Mammary epithelial cell (primary cell): ENCODE measurements at regions of chr15 and their contacts with region 1.

Region 1: GRCh38 chr15:40038638-40039543 is at the start of gene SRP14:
- DNase-seq: peak; percentile 89
- H3K4me3 ChIP-seq: peak within 1 kb of the TSS; percentile 65 to 76 (median 73)
- H3K27ac ChIP-seq: peak within 1 kb of the TSS; percentile 72
- H3K4me1 ChIP-seq: peaks cover 7% of the 10 kb centered on the region
- H3K27me3 ChIP-seq: no peaks in the 10 kb centered on the region
- CTCF ChIP-seq: peak in 1 of 2 donors; percentile 16
- total RNA-seq, gene SRP14: 85.7 to 148 TPM

Region 2: GRCh38 chr15:39887832-39888231 is 151.1 kb before region 1 on chr15:
- CTCF ChIA-PET with region 1: no interaction called
- dilution Hi-C with region 1: no loop called
- in situ Hi-C with region 1: no loop called
- intact Hi-C with region 1: loop called (anchors 5 kb)
- DNase-seq: peak; percentile 65
- H3K4me3 ChIP-seq: no peak overlapping the region
- H3K27ac ChIP-seq: no peak overlapping the region
- H3K4me1 ChIP-seq: peaks cover 42% of the 10 kb centered on the region
- H3K27me3 ChIP-seq: no peaks in the 10 kb centered on the region
- CTCF ChIP-seq: peak; percentile 20 to 64

Region 3: DNA sequence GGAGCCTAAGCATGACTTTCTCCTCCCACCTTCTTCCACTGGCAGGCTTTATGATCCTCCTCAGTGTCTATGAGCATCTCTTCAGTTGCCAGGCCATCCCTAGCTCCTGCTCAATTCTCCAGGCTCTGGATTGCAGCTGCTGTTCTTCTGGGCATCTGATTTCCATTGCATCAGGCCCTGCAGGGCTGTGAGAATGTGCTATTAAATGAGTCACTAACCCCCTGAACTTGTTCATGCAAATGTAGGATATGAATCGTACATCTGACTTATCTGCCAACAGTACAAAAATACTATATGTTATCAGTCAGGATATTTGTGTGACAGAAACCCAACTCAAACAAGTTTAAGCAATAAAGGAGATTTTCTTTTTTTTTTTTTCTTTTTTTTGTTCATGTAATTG is 130.7 kb before region 1 on chr15:
- CTCF ChIA-PET with region 1: no interaction called
- dilution Hi-C with region 1: no loop called
- in situ Hi-C with region 1: no loop called
- intact Hi-C with region 1: no loop called
- DNase-seq: peak; percentile 92
- H3K4me3 ChIP-seq: no peak overlapping the region
- H3K27ac ChIP-seq: peak overlapping the region; percentile 37
- H3K4me1 ChIP-seq: peaks cover 31% of the 10 kb centered on the region
- H3K27me3 ChIP-seq: no peaks in the 10 kb centered on the region
- CTCF ChIP-seq: no peak